CD14-positive monocyte (primary cell): ENCODE measurements at regions of chr6 and their contacts with region 1.

Region 1: GRCh38 chr6:154156135-154156896 is 117.3 kb downstream of the OPRM1 start:
- DNase-seq: no peak
- H3K4me3 ChIP-seq: no peak overlapping the region
- H3K4me3 Mint-ChIP-seq: peak overlapping the region in 1 of 2 donors; percentile 41
- H3K27ac ChIP-seq: peak overlapping the region; percentile 2 to 54
- H3K27ac Mint-ChIP-seq: peak overlapping the region in 6 of 7 donors; percentile 1 to 86 (median 62)
- H3K4me1 ChIP-seq: peaks cover 14 to 23% of the 10 kb centered on the region in 2 donors
- H3K4me1 Mint-ChIP-seq: peaks cover 33% of the 10 kb centered on the region
- H3K27me3 ChIP-seq: no peaks in the 10 kb centered on the region
- H3K27me3 Mint-ChIP-seq: peaks cover 0 to 2% (median 0%) of the 10 kb centered on the region in 3 donors
- CTCF ChIP-seq: peak; percentile 61

Region 2: GRCh38 chr6:153804755-153805330 is 351.5 kb before region 1 on chr6:
- intact Hi-C with region 1: no loop called
- DNase-seq: no peak
- H3K4me3 ChIP-seq: no peak overlapping the region
- H3K4me3 Mint-ChIP-seq: no peak overlapping the region
- H3K27ac ChIP-seq: no peak overlapping the region
- H3K27ac Mint-ChIP-seq: no peak overlapping the region
- H3K4me1 ChIP-seq: no peaks in the 10 kb centered on the region
- H3K4me1 Mint-ChIP-seq: no peaks in the 10 kb centered on the region
- H3K27me3 ChIP-seq: no peaks in the 10 kb centered on the region
- H3K27me3 Mint-ChIP-seq: peaks cover 0 to 2% (median 0%) of the 10 kb centered on the region in 3 donors
- CTCF ChIP-seq: no peak

Region 3: DNA sequence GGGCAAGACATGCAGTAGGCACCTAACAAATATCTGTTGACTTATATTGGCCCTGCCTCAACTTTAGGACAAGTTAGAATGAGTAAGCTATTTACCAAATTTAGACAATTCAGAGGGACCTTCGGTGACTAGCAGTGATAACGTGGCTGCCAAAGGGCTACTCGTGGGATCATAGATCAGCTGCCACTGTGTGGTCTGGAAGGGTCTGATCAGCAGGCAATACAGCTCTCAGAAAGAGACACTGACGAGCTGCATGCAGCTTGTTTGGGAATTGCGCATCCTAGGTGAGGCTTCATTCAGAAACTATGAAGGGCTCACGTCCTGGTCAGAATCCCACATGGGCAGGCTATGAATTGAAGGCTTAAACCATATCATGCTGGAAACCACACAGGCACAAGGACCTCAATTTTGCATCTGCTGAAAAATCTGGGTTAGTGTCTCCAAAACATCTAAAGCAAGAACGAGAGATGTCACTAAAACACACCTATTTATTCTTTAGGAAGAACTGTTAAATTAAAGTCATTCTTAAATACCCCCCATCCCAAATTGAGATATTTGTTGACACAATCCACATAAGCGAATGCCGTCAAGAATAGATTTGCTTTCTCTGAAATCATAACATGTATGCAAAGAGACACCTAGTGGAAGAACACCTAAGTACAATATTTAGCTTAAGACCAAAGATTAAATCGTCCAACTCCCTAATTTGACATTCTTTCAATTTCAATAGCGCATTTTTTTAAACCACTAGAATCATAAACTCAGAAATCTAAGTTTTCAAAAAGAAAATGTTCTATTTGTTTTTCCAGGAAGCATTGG is 120.7 kb after region 1 on chr6:
- intact Hi-C with region 1: loop called (anchors 5 kb)
- DNase-seq: peak; percentile 10 to 55 (median 37)
- H3K4me3 ChIP-seq: no peak overlapping the region
- H3K4me3 Mint-ChIP-seq: peak overlapping the region in 1 of 2 donors; percentile 17
- H3K27ac ChIP-seq: peak overlapping the region in 1 of 2 donors; percentile 29
- H3K27ac Mint-ChIP-seq: peak overlapping the region in 3 of 7 donors; percentile 6 to 69 (median 32)
- H3K4me1 ChIP-seq: peaks cover 5% of the 10 kb centered on the region in 2 donors
- H3K4me1 Mint-ChIP-seq: peaks cover 29% of the 10 kb centered on the region
- H3K27me3 ChIP-seq: no peaks in the 10 kb centered on the region
- H3K27me3 Mint-ChIP-seq: no peaks in the 10 kb centered on the region
- CTCF ChIP-seq: peak; percentile 76

Region 4: DNA sequence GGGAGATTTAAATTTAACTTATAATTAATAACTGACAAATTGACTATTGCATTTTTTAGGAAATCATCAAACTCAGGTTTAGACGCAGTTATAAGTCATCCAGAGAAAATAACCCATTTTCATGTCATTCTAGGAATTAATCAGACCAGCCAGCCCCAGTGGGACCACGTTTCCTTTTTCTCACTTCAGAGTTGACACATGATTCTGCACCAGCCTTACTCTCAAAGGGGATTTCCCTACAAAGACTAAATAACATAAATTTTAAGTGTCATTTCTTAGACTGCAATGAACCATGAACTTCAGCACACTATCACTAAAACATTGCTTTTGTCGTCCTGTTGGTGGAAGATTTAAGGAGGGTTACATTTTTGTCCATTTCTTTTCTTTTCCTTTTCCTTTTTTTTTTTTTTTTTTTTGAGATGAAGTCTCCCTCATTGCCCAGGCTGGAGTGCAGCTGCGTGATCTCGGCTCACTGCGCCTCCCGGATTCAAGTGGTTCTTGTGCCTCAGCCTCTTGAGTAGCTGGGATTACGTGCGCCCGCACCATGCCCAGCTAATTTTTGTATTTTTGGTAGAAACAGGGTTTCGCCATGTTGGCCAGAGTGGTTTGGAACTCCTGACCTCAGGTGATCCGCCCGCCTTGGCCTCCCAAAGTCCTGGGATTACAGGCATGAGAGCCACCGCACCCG is 196.7 kb after region 1 on chr6:
- intact Hi-C with region 1: loop called in 1 of 2 experiments (anchors 5 kb)
- DNase-seq: peak; percentile 52 to 82 (median 68)
- H3K4me3 ChIP-seq: peak overlapping the region in 1 of 3 experiments; percentile 76
- H3K4me3 Mint-ChIP-seq: peak overlapping the region; percentile 50 to 73
- H3K27ac ChIP-seq: peak overlapping the region; percentile 73 to 83
- H3K27ac Mint-ChIP-seq: peak overlapping the region; percentile 80 to 98 (median 92)
- H3K4me1 ChIP-seq: peaks cover 62 to 71% of the 10 kb centered on the region in 2 donors
- H3K4me1 Mint-ChIP-seq: peaks cover 69% of the 10 kb centered on the region
- H3K27me3 ChIP-seq: no peaks in the 10 kb centered on the region
- H3K27me3 Mint-ChIP-seq: no peaks in the 10 kb centered on the region
- CTCF ChIP-seq: no peak